OCI-LY7 (cell line): ENCODE measurements at regions of chr11 and their contacts with region 1.

Region 1: DNA sequence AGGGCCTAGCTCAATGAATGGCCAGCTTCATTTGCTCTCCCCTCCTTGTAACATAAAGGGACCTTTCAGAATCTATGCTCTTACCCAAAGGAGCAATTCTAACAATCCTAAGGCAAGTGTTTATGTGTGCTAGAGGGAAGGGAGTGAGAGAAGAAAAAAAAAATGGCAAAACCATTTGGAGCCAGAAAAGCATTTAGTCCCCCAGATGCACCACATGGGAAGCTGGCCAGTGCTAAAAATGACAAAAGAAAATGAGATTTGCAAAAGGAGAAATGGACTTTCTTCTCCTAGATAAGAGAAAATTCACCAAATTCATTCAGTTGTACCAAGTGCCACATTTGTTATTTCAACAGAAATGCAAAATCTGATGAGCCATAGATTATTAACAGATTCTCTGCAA is 52.8 kb downstream of the SERGEF start:
- DNase-seq: no peak
- H3K4me3 ChIP-seq: no peak overlapping the region
- H3K27ac ChIP-seq: no peak overlapping the region
- H3K4me1 ChIP-seq: no peaks in the 10 kb centered on the region
- CTCF ChIP-seq: no peak

Region 2: DNA sequence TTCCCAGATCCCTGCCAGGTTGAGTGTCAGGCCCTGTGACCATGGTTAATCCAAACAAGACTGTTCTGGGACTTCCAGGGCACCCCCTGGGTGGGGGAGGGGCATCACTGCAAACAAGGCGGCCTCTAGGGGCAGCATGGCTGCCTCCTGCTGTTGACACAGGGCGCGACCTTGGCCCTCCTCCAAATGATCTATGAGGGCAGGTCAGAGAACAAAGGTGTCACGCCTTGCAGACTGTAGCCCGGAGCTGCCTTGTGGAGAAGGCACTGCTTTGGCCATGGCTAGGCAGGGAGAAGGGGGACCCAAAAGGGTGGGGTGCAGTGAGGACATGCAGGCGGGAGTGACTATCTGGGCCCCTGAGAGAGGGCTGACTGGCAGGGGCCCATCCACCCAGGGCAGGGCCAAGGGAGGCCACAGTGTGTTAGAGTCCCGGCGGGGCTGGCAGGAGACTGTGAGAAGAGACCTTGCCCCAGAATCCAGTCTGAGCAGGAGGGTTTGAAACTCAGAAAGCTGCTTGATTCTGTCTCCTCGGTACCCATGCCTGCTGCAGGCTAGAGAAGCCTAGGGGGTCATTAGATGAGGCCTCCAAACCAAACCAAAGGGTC is 189.9 kb before region 1 on chr11:
- CTCF ChIA-PET with region 1: no interaction called
- POLR2A ChIA-PET with region 1: no interaction called
- intact Hi-C with region 1: no loop called
- DNase-seq: peak; percentile 15
- H3K4me3 ChIP-seq: no peak overlapping the region
- H3K27ac ChIP-seq: no peak overlapping the region
- H3K4me1 ChIP-seq: no peaks in the 10 kb centered on the region
- CTCF ChIP-seq: peak; percentile 55

Region 3: GRCh38 chr11:17914957-17915356 is 45.1 kb before region 1 on chr11:
- CTCF ChIA-PET with region 1: no interaction called
- POLR2A ChIA-PET with region 1: interaction called, 3 read pairs
- intact Hi-C with region 1: loop called (anchors 5 kb)
- DNase-seq: no peak
- H3K4me3 ChIP-seq: no peak overlapping the region
- H3K27ac ChIP-seq: no peak overlapping the region
- H3K4me1 ChIP-seq: no peaks in the 10 kb centered on the region
- CTCF ChIP-seq: no peak

Region 4: GRCh38 chr11:18056561-18057181 is 96.6 kb after region 1 on chr11:
- CTCF ChIA-PET with region 1: no interaction called
- POLR2A ChIA-PET with region 1: no interaction called
- intact Hi-C with region 1: no loop called
- DNase-seq: no peak
- H3K4me3 ChIP-seq: no peak overlapping the region
- H3K27ac ChIP-seq: no peak overlapping the region
- H3K4me1 ChIP-seq: peaks cover 5% of the 10 kb centered on the region
- CTCF ChIP-seq: no peak